ENCODE measurements at regions of chr7 and their contacts with region 1.

Region 1: DNA sequence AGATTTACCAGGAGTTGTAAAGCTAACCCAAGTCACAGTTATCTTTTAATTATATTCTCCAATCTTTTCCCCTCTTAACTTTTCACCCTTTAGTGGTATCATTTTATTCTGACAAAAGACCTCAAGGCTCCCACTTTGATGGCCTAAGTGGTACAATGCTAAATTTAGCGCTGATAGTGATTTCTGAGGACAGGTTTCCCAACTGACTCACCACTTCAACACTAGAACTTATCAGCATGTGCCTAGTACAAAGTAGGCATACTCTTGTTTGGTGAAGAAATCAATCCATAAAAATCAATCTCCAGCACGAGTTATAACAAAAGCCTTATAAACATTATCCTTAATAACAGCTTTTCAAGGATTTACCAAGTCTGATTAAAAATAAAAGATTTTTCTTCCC is 7.5 kb downstream of the SNX13 start:
- DNase-seq: no peak
- ATAC-seq: no peak
- H3K4me3 ChIP-seq: no peak overlapping the region
- H3K4me3 Mint-ChIP-seq: no peak overlapping the region
- H3K27ac ChIP-seq: no peak overlapping the region
- H3K27ac Mint-ChIP-seq: no peak overlapping the region
- H3K4me1 ChIP-seq: peaks cover 33% of the 10 kb centered on the region
- H3K4me1 Mint-ChIP-seq: peaks cover 82% of the 10 kb centered on the region
- H3K27me3 ChIP-seq: no peaks in the 10 kb centered on the region
- H3K27me3 Mint-ChIP-seq: no peaks in the 10 kb centered on the region
- CTCF ChIP-seq: no peak

Region 2: GRCh38 chr7:17971411-17971810 is 38.6 kb after region 1 on chr7:
- CTCF ChIA-PET with region 1: no interaction called
- POLR2A ChIA-PET with region 1: no interaction called
- intact Hi-C with region 1: loop called in 1 of 2 experiments (anchors 1 kb)
- DNase-seq: no peak
- ATAC-seq: no peak
- H3K4me3 ChIP-seq: no peak overlapping the region
- H3K4me3 Mint-ChIP-seq: no peak overlapping the region
- H3K27ac ChIP-seq: no peak overlapping the region
- H3K27ac Mint-ChIP-seq: no peak overlapping the region
- H3K4me1 ChIP-seq: no peaks in the 10 kb centered on the region
- H3K4me1 Mint-ChIP-seq: no peaks in the 10 kb centered on the region
- H3K27me3 ChIP-seq: peaks cover 0 to 2% of the 10 kb centered on the region in 2 experiments
- H3K27me3 Mint-ChIP-seq: no peaks in the 10 kb centered on the region
- CTCF ChIP-seq: no peak

Measured in CD8-positive, alpha-beta T cell (primary cell).